GM23248 (cell line): ENCODE measurements at regions of chr6 and their contacts with region 1.

Region 1: DNA sequence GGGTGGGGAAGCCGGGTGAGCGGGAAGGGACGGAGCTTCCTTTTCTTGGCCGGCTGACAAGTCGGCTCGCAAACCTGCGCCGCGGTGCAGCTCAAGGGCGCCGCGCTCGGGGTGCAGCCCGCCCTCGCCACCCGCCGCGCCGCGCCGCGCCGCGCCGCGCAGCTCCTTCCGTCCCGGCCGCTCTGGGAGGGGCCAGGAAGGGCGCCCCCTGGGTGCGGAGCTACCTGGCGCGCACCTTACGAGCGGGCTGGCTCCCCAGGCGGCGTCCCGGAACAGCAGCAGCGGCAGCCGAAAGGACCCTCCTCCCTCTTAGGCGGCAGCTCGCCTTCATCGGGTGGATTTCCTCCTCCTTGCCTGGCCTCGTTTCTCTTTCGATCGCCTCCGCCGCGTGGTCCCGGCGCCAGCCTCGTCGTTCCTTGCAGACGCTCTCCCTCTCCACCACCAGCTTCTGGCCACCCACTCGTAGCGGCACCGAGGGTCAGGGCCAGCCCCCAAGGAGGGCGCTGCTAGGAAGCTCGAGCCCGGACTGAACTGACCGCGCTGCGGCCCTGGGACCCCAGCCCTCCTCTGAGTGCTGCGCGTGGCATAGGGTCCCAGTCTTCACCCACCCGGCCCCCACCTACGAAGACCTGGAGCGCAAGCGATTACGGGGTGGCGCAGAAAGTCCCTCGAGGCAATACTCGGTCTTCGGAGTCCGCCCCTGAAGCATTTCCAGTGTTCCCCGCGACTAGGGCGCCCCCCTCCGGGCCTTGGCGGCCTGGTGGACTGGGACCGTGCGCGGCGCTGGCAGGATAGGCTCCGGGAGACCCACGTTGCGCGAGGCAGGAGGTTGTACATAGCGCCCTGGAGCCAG is at the start of gene MAP3K5:
- DNase-seq: peak; percentile 95
- H3K4me3 ChIP-seq: peak within 1 kb of the TSS; percentile 92
- H3K27ac ChIP-seq: peak within 1 kb of the TSS; percentile 41; the same call in 1 of the 2 replicates
- H3K4me1 ChIP-seq: peaks cover 27% of the 10 kb centered on the region
- H3K27me3 ChIP-seq: no peaks in the 10 kb centered on the region
- total RNA-seq, gene MAP3K5: 3.3 and 4.1 TPM in 2 replicates

Region 2: DNA sequence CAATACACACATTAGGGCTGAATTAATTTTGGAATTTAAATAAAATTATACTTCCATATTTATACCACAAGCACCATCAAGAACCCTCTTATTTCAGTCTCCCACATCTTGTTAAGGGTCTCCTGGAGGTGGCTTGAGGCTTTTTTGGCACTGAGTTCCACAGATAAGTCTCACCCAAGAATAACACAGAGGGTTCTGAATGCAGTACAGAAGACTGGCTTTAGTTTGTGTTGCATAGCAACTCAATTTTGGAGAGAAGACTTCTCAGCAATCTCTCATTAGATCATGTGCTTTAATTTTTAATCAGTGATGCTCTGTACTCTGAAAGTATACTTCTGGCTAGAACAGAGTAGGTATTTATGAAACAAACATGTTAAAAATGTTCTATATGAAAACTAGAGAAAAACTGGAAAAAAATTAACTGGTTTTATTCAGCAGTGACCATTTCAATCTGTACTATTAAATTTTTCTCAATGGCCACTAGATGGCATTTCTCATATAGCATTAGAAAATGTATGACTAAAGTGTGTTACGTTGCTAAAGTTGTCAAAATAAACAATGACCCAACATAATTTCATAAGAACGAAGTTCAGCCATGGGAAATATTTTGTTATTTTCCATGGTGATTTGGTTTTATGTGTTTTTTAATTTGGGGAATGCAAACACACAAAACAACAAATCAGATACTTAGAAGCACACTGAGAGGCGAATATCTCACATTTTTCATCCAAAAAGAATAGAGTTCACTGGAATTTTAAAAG is 209.7 kb before region 1 on chr6:
- in situ Hi-C with region 1: loop called (anchors 10 kb)
- DNase-seq: peak; percentile 93
- H3K4me3 ChIP-seq: no peak overlapping the region
- H3K27ac ChIP-seq: peak overlapping the region; percentile 53
- H3K4me1 ChIP-seq: peaks cover 21% of the 10 kb centered on the region
- H3K27me3 ChIP-seq: no peaks in the 10 kb centered on the region

Region 3: GRCh38 chr6:137058037-137058436 is 265.4 kb after region 1 on chr6:
- in situ Hi-C with region 1: no loop called
- DNase-seq: no peak
- H3K4me3 ChIP-seq: no peak overlapping the region
- H3K27ac ChIP-seq: no peak overlapping the region
- H3K4me1 ChIP-seq: no peaks in the 10 kb centered on the region
- H3K27me3 ChIP-seq: no peaks in the 10 kb centered on the region; the same call in 1 of the 2 replicates